Activated T-helper 1 cell treated with anti-CD3 and anti-CD28 coated beads, Interleukin-12 subunit alpha, Interleukin-12 subunit beta, Interleukin-2, Interleukin-4 antibody, amounts not matched to agents 30 ng/mL and 10 ng/mL and 1 ng/mL, durations not matched to agents 14 hours and 24 hours and 36 hours (primary cell): ENCODE measurements at regions of chr15 and their contacts with region 1.

Region 1: DNA sequence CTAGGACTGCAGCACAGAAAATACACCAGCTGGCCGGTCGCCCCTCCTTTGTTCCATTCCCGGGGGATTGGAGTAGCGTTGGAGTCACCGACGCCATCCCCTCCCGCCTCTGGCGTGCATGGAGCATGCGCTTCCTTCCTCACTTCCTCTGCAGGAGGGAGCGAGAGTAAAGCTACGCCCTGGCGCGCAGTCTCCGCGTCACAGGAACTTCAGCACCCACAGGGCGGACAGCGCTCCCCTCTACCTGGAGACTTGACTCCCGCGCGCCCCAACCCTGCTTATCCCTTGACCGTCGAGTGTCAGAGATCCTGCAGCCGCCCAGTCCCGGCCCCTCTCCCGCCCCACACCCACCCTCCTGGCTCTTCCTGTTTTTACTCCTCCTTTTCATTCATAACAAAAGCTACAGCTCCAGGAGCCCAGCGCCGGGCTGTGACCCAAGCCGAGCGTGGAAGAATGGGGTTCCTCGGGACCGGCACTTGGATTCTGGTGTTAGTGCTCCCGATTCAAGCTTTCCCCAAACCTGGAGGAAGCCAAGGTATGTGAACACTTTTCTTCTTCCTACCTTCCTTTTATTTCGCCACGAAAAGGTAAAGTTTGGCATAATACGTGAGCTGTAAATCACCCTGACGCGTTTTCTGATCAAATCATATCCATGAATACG is at the start of gene SCG3:
- DNase-seq: peak; percentile 55
- H3K4me3 Mint-ChIP-seq: no peak within 1 kb of the TSS
- H3K27ac Mint-ChIP-seq: no peak within 1 kb of the TSS
- H3K4me1 Mint-ChIP-seq: peaks cover 8% of the 10 kb centered on the region
- H3K27me3 Mint-ChIP-seq: peaks cover 39% of the 10 kb centered on the region
- total RNA-seq, gene SCG3: not detected in 2 replicates

Region 2: DNA sequence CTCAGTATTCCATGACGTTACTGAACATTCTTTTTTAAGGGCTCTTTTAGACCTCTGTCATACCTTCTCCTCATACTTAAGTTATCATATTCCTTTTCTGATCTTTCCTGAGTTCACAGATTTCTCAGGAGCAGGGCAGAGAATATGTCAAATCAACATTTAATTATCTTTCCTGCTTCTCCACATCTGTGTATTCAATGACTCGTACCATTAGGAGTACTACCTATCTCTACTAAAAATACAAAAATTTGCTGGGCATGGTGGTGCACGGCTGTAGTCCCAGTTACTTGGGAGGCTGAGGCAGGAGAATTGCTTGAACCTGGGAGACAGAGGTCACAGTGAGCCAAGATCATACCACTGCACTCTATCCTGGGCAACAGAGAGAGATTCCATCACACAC is 1906.7 kb before region 1 on chr15:
- intact Hi-C with region 1: loop called (anchors 5 kb)
- DNase-seq: no peak
- H3K4me3 Mint-ChIP-seq: no peak overlapping the region
- H3K27ac Mint-ChIP-seq: no peak overlapping the region
- H3K4me1 Mint-ChIP-seq: no peaks in the 10 kb centered on the region
- H3K27me3 Mint-ChIP-seq: no peaks in the 10 kb centered on the region